Heart left ventricle (tissue), 16 donors: ENCODE measurements at regions of chr2 and their contacts with region 1.

Region 1: DNA sequence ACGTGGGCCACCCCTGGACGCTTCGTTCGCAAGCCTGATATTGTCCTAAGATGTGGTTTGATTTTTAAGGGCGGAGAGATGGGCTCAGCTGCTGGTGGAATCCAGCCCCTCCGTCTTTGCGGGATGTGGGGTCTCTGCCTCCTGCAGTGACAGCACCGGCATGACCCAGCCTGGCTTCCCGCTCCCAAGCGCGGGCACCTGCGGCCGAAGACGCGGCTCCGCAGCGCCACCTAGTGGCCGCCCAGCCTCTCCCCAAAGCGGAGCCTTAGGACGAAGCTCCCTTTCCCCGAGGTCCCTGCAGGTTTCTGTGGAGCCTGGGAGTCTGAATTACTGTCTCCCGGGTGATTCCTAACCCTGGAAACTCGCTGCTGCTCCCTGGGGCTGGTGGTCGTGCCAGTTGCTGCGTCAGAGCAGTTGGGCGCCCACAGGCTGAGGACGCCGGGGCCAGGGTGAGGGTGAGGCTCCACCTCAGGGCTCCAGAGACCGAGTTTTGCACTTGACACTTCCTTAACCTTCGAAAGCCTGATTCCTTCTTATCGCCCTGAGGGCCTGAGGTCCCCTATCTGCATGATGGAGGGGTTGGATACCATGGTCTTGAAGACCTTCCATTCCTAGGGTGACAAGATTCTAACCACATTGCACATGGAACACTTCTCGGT is 137.5 kb downstream of the TPO start:
- DNase-seq: peak; percentile 42 to 80 (median 56)
- ATAC-seq: peak; percentile 49 to 86 (median 78)
- H3K4me3 ChIP-seq: no peak overlapping the region
- H3K27ac ChIP-seq: no peak overlapping the region
- H3K4me1 ChIP-seq: peaks cover 0 to 17% (median 6%) of the 10 kb centered on the region in 12 donors
- H3K27me3 ChIP-seq: peaks cover 0 to 7% (median 0%) of the 10 kb centered on the region in 9 donors
- CTCF ChIP-seq: peak; percentile 85 to 100 (median 98)
- POLR2A ChIP-seq: no peak

Region 2: DNA sequence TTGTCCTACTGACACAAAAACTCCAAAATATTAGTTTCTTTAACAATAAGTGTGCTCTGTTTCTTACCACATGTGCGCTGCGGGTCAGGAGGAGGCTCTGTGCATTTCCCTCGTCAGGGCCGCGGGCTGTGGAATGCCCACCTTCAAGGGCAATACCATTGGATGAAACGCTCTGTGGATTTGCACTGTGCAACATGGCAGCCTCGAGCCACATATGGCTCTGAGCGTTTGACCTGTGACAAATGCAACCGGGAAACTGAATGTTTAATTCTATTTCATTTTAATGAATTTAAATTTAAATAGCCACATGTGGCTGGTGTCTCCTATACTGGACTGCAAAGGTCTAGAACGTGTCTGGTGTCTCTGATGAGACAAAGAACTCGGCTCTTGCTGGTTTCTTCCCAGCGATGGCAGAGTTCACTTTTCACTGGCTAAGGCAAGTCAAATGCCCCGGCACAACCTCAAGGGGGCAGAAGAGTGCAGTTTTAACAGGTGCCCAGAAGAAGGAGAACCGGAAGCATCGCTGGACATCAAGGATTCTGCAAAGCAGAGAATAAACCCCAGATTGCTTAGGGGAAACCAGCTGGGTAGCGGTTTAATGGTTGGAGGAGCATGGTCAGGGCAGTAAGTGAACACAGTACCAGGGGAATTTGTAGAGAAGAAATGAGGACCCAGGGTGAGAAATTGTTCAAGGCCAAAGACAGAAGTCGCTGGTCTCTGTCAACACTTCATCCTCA is 836.6 kb before region 1 on chr2:
- intact Hi-C with region 1: loop called (anchors 1 to 10 kb)
- DNase-seq: peak in 2 of 5 donors; percentile 29 to 51
- ATAC-seq: peak in 3 of 4 donors; percentile 52 to 68 (median 57)
- H3K4me3 ChIP-seq: no peak overlapping the region
- H3K27ac ChIP-seq: no peak overlapping the region
- H3K4me1 ChIP-seq: no peaks in the 10 kb centered on the region
- H3K27me3 ChIP-seq: peaks cover 0 to 58% (median 13%) of the 10 kb centered on the region in 9 donors
- CTCF ChIP-seq: peak; percentile 53 to 70 (median 62)
- POLR2A ChIP-seq: no peak

Region 3: DNA sequence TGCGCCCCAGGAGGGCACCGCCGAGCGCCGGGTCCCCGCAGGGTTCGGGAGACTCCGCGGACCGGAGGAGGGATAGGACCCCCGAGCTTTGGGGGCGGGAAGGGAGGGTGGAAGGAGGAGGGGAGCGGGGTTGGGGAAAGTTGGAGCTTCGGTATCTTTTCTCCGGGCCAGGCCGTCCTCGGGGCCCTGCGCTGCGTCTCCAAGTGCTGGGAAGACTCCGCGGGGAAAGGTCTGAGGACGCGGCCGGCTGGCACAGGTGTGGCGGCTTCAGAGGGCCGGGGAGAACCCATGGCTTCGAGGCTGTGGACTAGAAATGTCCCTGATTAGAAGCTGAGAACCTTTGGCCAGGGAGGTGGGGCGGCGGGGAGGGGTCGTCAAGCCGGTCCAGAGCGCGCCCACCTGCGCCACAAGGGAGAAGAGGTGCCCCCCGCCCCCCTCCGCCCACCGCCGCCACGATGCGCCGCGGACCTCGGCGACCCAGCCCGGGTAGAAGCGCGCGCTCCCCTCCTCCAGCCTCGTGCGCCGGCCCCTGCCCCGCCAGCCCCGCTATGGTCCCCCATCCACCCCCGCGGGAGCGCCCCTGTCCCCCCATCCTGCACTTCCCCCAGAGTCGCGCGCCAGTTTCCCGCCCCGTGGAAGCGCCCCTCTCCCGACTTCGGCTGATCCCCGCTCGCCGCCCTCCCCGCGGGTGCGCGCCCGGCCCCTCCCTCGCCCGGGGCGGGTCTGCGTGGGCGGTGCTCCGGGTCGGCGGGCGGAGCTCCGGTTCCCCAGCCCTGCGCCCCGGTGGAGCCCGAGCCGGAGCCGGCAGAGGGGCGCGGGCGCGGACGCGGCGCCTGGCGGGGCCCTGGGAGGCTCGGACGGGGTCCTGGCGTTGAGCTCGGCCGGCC is 600.5 kb before region 1 on chr2 and contains the start of gene SNTG2:
- intact Hi-C with region 1: loop called in 9 of 10 experiments (anchors 2 to 5 kb)
- DNase-seq: peak in 3 of 5 donors; percentile 37 to 40 (median 40)
- ATAC-seq: peak in 3 of 4 donors; percentile 80 to 89 (median 87)
- H3K4me3 ChIP-seq: peak within 1 kb of the TSS; percentile 34 to 71 (median 56)
- H3K27ac ChIP-seq: no peak within 1 kb of the TSS
- H3K4me1 ChIP-seq: peaks cover 0 to 21% (median 9%) of the 10 kb centered on the region in 12 donors
- H3K27me3 ChIP-seq: peaks cover 20 to 88% (median 53%) of the 10 kb centered on the region in 9 donors
- CTCF ChIP-seq: no peak
- POLR2A ChIP-seq: peak in 1 of 2 donors; percentile 17
- total RNA-seq, gene SNTG2: 0.58 to 3.2 (median 1.1) TPM

Region 4: DNA sequence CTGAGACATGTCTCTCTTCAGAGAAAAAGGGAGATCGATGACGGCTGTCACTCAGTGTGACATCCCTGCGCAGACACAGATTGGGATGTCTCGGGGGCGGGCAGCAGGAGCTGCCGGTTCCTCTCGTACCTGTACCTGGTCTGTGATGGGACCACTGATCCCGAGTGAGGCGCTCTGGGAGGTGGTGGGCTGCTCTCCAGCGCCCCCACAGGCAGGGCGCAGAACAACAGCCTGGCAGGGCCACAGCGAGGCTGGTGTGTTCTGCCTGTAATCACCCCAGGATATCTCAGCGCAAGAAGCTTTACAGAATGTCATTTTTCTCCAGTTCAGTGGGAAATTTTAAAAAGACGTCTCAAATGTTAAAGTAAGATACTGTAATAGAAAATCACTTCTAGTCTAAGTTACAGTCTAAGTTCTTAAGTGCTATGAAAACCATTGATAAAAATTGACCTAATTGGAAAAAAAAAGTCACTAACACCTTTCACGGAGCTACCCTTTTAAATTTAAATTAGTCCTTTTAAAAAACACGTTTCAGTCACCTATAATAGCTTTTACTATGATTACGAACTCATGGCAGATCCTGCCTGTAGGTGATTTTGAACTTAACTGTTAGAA is 410.3 kb before region 1 on chr2:
- intact Hi-C with region 1: loop called in 1 of 10 experiments (anchors 10 kb)
- DNase-seq: no peak
- ATAC-seq: peak in 2 of 4 donors; percentile 47 to 49
- H3K4me3 ChIP-seq: no peak overlapping the region
- H3K27ac ChIP-seq: peak overlapping the region in 9 of 12 donors; percentile 1 to 71 (median 34)
- H3K4me1 ChIP-seq: peaks cover 0 to 5% (median 0%) of the 10 kb centered on the region in 12 donors
- H3K27me3 ChIP-seq: peaks cover 0 to 4% (median 0%) of the 10 kb centered on the region in 9 donors
- CTCF ChIP-seq: peak; percentile 47 to 84 (median 74)
- POLR2A ChIP-seq: no peak

Region 5: GRCh38 chr2:1817256-1818051 is 266.7 kb after region 1 on chr2:
- intact Hi-C with region 1: loop called in 2 of 10 experiments (anchors 5 kb)
- DNase-seq: peak; percentile 86 to 93 (median 89)
- ATAC-seq: peak; percentile 92 to 96 (median 94)
- H3K4me3 ChIP-seq: peak overlapping the region in 2 of 12 donors; percentile 3 to 24
- H3K27ac ChIP-seq: peak overlapping the region; percentile 31 to 95 (median 79)
- H3K4me1 ChIP-seq: peaks cover 0 to 25% (median 12%) of the 10 kb centered on the region in 12 donors
- H3K27me3 ChIP-seq: no peaks in the 10 kb centered on the region
- CTCF ChIP-seq: peak; percentile 90 to 99 (median 98)
- POLR2A ChIP-seq: no peak